RWPE1 (cell line): ENCODE measurements at regions of chr16 and their contacts with region 1.

Region 1: GRCh38 chr16:53061701-53062159 is 6.9 kb downstream of the CHD9 start:
- DNase-seq: no peak
- H3K27ac ChIP-seq: 0 out of 2 replicates have a peak overlapping the region, but pooled peaks have one; percentile 24
- CTCF ChIP-seq: no peak

Region 2: DNA sequence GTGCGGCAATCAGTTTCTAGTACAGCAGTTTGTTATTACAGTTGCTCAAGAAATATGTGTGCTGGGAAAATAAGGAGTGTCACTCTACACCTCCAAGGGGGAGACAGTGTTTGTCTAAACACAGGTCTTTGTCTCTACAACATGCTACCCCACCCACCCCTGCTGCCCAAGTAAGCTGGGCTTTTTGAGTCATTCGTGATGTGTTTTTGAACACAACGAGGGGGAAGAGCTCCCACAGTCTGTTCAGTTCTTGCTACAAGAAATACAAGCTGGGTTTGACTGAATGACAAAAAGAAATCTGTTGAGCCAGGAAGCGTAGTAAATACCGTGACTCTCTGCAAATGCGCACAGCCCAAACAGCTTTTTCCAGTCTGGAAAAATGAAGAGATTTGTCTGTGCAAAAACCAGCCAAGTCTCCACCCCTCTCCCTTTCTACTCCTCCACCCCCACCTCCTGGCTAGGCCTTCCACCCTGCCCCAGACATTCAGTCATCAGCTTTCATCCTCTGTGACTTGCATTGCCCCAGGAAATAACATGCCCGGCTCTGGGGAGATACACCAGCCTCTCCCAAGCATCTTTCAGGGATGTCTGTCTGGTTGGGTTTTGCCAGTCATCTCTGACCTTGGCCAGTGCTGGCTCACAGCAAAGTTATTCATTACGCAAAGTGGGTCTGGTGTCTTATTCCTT is 18.8 kb after region 1 on chr16:
- CTCF ChIA-PET with region 1: interaction called, 10 read pairs
- POLR2A ChIA-PET with region 1: no interaction called
- DNase-seq: peak; percentile 96
- H3K27ac ChIP-seq: peak overlapping the region; percentile 91
- CTCF ChIP-seq: no peak

Region 3: DNA sequence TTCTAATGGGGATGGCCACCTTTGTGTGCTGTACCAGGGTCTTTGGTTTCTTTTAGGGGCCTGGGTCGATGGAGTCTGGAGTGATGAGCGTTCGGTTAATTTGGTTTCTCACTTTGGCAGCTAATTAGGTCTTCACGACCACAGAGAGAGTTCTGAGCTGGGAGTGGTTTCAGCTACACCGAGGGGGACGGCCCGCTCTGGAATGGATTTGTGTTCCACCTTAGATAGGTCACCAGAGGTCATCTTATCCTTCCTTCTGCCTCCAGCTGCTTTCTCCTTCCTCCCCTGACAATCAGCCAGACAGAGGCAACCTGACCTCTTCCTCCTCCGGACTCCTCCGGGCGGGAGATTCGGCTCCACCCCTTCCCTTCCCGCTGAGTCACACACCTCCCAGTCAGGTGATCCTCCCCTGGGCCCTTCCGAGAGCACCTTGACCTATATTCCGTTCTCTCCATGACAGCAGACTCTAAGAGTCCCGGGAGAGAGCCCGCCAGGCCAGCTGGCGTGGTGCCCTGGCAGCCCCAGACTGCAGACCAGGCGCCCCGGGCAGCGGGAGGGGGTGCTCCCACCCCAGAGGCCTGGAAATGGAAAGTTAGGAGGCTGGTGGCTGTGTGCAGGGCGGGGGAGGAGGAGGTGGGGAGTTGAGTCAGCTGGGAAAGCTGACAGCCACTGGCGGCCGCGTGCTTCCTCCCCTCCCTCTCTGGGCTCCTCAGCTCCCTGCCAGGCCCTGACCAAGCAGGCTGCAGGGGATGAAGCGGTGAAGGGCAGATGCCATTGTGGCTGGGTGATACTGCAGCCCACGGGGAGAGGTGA is 37.8 kb after region 1 on chr16:
- CTCF ChIA-PET with region 1: interaction called, 10 read pairs
- POLR2A ChIA-PET with region 1: no interaction called
- DNase-seq: peak; percentile 93
- H3K27ac ChIP-seq: peak overlapping the region; percentile 99
- CTCF ChIP-seq: no peak

Region 4: DNA sequence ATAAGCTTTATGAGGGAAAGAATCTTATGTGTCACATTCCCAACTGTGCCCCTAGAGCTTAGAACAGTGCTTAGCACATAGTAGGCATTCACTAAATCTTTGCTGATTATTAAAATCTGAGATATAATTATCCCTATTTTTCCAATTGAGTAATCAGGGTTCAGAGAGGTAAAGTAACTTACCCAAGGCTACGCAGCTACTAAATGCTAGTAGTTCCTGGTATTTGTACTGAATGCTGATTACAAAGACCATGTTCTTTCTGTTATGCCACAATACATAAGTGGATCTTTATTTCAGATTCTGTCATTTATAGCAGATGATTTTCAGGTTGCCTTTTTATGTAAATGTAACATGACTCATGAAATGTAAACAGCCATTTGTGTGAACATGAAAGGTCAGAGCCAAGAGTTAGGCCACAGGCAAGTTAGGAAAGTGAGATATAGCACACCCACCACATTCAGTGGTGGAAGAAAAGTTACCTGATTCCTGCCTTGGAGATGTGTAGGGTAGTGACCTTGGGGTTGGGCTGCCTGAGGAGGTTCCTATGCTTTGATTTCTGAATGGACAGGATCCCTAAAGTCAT is 719.4 kb after region 1 on chr16:
- CTCF ChIA-PET with region 1: no interaction called
- POLR2A ChIA-PET with region 1: no interaction called
- DNase-seq: no peak
- H3K27ac ChIP-seq: no peak overlapping the region
- CTCF ChIP-seq: no peak